ENCODE measurements at regions of chr12 and their contacts with region 1.

Region 1: DNA sequence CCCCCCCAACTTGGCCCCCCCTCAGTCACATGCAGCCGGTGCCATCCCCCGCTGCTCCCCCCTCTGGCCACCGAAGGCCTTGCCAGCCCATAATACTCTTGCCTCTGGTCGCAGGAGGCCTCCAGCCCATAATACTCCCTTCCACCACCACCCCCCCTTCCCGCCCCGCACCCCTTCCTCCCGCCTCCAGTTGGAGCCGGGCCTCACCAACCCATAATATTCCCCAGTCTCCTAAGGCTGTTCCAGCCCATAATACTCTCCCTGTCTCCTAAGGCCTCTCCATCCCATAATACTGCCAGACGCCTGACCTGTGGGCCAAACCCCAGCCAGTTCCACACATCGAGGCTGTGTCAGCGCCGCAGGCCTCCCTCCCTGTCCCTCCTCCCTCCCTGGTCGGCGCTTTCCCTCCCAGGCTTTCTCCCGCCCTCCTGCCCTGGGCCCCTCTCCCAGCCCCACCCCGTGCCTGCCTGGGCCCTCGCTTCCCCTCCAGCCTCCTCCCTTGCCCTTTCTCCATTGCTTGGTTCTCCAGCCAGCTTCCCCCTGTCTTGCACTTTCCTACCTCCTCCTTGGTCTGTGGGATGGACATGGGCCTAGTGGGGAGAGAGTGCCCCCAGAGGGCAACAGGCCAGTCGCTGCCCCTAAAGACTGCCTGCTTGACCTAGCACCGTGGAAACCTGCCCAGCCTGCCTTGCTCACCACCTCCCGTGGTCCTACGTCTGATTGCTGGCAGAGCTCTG is 6.8 kb upstream of the CHD4 start:
- DNase-seq: peak; percentile 91 to 97
- H3K4me3 ChIP-seq: peak overlapping the region; percentile 8; the same call in 1 of the 2 replicates
- H3K27ac ChIP-seq: peak overlapping the region; percentile 51
- H3K4me1 ChIP-seq: peaks cover 34% of the 10 kb centered on the region
- H3K27me3 ChIP-seq: no peaks in the 10 kb centered on the region
- CTCF ChIP-seq: no peak

Region 2: GRCh38 chr12:6323340-6323994 is 290.5 kb before region 1 on chr12:
- CTCF ChIA-PET with region 1: no interaction called
- POLR2A ChIA-PET with region 1: interaction called, 13 read pairs
- intact Hi-C with region 1: no loop called
- DNase-seq: peak; percentile 75 to 88
- H3K4me3 ChIP-seq: no peak overlapping the region
- H3K27ac ChIP-seq: peak overlapping the region; percentile 60
- H3K4me1 ChIP-seq: peaks cover 39% of the 10 kb centered on the region
- H3K27me3 ChIP-seq: no peaks in the 10 kb centered on the region
- CTCF ChIP-seq: peak; percentile 79

Region 3: GRCh38 chr12:6461401-6462233 is 152.3 kb before region 1 on chr12:
- CTCF ChIA-PET with region 1: interaction called, 10 read pairs
- POLR2A ChIA-PET with region 1: no interaction called
- intact Hi-C with region 1: no loop called
- DNase-seq: no peak
- H3K4me3 ChIP-seq: no peak overlapping the region
- H3K27ac ChIP-seq: no peak overlapping the region
- H3K4me1 ChIP-seq: no peaks in the 10 kb centered on the region
- H3K27me3 ChIP-seq: no peaks in the 10 kb centered on the region
- CTCF ChIP-seq: no peak

Region 4: GRCh38 chr12:6662906-6663742 is 49.2 kb after region 1 on chr12 and contains the start of gene ING4:
- CTCF ChIA-PET with region 1: interaction called, 6 read pairs
- POLR2A ChIA-PET with region 1: interaction called, 3 read pairs
- intact Hi-C with region 1: loop called (anchors 1 kb)
- DNase-seq: peak; percentile 98 to 99
- H3K4me3 ChIP-seq: peak within 1 kb of the TSS; percentile 63
- H3K27ac ChIP-seq: peak within 1 kb of the TSS; percentile 58
- H3K4me1 ChIP-seq: peaks cover 8% of the 10 kb centered on the region
- H3K27me3 ChIP-seq: no peaks in the 10 kb centered on the region
- CTCF ChIP-seq: no peak
- total RNA-seq, gene ING4: 87.6 and 88.7 TPM in 2 replicates

Region 5: GRCh38 chr12:6752921-6753771 is 139.2 kb after region 1 on chr12 and contains the start of gene MLF2:
- CTCF ChIA-PET with region 1: no interaction called
- POLR2A ChIA-PET with region 1: interaction called, 3 read pairs
- intact Hi-C with region 1: loop called (anchors 1 kb)
- DNase-seq: peak; percentile 95 to 100
- H3K4me3 ChIP-seq: peak within 1 kb of the TSS; percentile 77
- H3K27ac ChIP-seq: peak within 1 kb of the TSS; percentile 83
- H3K4me1 ChIP-seq: peaks cover 16% of the 10 kb centered on the region
- H3K27me3 ChIP-seq: no peaks in the 10 kb centered on the region
- CTCF ChIP-seq: no peak; the same call in 1 of the 2 replicates
- total RNA-seq, gene MLF2: 349 and 379 TPM in 2 replicates

Region 6: GRCh38 chr12:6778574-6779550 is 164.9 kb after region 1 on chr12:
- CTCF ChIA-PET with region 1: interaction called, 3 read pairs
- POLR2A ChIA-PET with region 1: no interaction called
- intact Hi-C with region 1: loop called (anchors 2 kb)
- DNase-seq: peak; percentile 86 to 98
- H3K4me3 ChIP-seq: peak overlapping the region; percentile 47; the same call in 1 of the 2 replicates
- H3K27ac ChIP-seq: no peak overlapping the region
- H3K4me1 ChIP-seq: no peaks in the 10 kb centered on the region
- H3K27me3 ChIP-seq: no peaks in the 10 kb centered on the region
- CTCF ChIP-seq: peak; percentile 98

Region 7: DNA sequence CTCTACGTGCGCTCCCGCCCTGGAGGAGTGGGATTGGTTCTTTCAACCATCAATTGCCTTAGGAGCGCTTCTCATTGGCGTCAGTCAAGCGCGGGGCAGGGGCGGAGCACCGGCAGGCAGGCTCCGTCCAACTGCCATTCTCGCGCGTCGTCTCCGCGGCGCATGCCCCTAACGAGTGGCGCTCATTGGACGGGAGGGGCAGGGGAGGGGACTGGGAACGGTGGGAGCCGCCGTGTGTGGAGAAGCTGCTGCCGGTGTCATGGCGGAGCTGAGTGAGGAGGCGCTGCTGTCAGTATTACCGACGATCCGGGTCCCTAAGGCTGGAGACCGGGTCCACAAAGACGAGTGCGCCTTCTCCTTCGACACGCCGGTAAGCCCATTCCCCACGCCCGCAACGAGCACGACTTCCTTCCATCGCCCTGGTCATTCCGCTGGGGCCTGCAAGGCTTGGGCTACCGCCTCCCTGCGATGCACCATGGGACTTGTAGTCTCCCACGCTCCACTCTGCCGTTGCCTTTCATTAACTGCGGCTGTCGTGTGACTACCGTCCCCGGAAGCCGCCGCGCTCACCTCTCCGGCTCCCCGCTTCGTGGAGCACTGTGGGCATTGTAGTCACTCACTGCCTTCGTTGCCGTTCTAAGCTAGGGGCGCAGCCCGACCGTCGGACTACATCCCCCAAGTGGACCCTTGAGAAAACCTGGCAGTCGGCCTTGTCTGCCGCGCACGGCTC is 238.1 kb after region 1 on chr12 and contains the start of gene USP5:
- CTCF ChIA-PET with region 1: interaction called, 10 read pairs
- POLR2A ChIA-PET with region 1: interaction called, 12 read pairs
- intact Hi-C with region 1: loop called (anchors 1 kb)
- DNase-seq: peak; percentile 99 to 100
- H3K4me3 ChIP-seq: peak within 1 kb of the TSS; percentile 83
- H3K27ac ChIP-seq: peak within 1 kb of the TSS; percentile 69
- H3K4me1 ChIP-seq: peaks cover 25% of the 10 kb centered on the region
- H3K27me3 ChIP-seq: no peaks in the 10 kb centered on the region
- CTCF ChIP-seq: no peak
- total RNA-seq, gene USP5: 267 and 308 TPM in 2 replicates